Adrenal gland (tissue), 19 donors: ENCODE measurements at regions of chr3 and their contacts with region 1.

Region 1: DNA sequence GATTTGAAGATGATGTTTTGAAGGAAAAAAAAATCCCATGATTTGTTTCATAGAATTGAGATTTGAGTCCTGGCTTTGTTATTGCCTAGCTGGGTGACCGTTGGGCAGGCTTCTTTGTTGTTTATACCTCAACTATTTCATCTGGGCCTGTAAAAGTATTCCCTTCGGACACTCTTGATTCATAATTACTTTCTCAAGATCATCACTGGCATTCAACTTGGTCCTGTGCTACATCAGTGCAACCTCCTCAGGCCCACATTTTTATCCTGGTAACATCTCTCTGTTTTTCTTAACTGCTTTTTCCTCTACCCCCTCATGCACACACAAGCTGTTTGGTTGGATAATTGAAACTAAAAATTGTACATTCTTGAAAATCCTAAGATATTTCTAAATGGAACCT is 67.5 kb upstream of the P3H2 start:
- DNase-seq: no peak
- H3K4me3 ChIP-seq: no peak overlapping the region
- H3K27ac ChIP-seq: no peak overlapping the region
- H3K4me1 ChIP-seq: no peaks in the 10 kb centered on the region
- H3K27me3 ChIP-seq: no peaks in the 10 kb centered on the region
- CTCF ChIP-seq: no peak
- POLR2A ChIP-seq: no peak

Region 2: DNA sequence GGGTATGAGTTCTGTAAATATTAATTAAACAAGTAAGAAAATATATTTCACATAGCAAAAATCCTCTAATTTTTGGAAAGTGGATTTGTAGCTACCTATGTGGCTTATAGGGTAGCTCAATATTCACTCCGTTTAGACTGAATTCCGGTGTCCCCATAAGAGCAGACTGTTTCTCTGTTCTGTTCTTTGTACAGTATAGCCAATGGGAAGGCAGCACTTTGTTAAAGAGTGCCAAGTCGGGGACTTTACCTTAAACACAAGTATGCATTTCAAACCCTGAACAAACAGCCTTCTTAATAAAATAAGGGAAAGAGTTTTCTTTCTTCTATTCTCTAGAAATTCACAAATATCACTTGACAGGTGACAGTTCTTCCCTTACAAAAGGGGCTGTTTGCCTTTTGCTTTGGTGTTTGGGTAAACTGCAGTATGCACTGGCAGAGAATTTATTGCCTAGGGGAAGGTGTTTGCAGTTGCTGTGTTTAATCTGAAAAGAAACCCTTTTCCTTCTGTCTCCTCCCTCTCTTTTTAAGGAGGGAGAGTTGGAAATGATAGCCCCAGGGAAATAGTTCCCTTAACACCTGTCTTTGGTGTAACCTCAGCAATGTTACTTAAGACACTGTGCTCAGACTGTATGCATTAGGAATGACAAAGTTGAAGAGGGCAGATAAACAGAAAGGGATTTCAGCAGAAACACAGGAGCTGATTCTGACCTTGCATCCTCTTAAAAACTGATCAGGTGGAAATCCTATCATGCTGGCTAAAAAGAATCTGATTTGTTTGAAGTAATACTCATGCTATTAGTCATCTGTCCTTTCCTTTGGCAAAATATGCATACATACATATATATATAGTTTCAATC is 431.7 kb before region 1 on chr3:
- intact Hi-C with region 1: loop called in 1 of 2 experiments (anchors 5 kb)
- DNase-seq: no peak
- H3K4me3 ChIP-seq: no peak overlapping the region
- H3K27ac ChIP-seq: no peak overlapping the region
- H3K4me1 ChIP-seq: no peaks in the 10 kb centered on the region
- H3K27me3 ChIP-seq: no peaks in the 10 kb centered on the region
- CTCF ChIP-seq: no peak
- POLR2A ChIP-seq: no peak

Region 3: DNA sequence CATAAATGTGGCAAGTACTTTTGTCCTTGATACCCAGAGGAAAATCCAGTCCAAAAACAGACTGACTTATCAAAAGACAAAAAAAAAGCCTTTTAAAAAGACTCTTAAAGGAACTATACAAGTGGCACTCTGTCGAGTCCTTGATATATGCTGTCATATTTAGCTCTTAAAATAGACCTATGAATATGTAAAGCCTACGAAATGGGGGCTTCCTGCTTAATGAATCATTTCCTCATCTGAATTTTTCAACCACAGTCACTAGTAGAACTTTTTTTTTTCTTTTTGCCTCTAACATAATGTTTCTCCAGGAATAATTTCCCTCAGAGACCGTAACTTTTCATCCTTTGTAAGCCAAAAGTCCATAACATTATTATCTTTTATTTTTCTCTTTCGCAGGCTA is 163.3 kb before region 1 on chr3:
- intact Hi-C with region 1: no loop called
- DNase-seq: no peak
- H3K4me3 ChIP-seq: no peak overlapping the region
- H3K27ac ChIP-seq: no peak overlapping the region
- H3K4me1 ChIP-seq: peaks cover 0 to 8% of the 10 kb centered on the region in 2 donors
- H3K27me3 ChIP-seq: no peaks in the 10 kb centered on the region
- CTCF ChIP-seq: no peak
- POLR2A ChIP-seq: no peak